ENCODE measurements at regions of chr19 and their contacts with region 1.

Region 1: GRCh38 chr19:1652471-1653299 is at the start of gene TCF3:
- DNase-seq: peak; percentile 99
- ATAC-seq: peak; percentile 82
- H3K4me3 Mint-ChIP-seq: peak within 1 kb of the TSS; percentile 91
- H3K27ac Mint-ChIP-seq: peak within 1 kb of the TSS; percentile 95
- H3K4me1 Mint-ChIP-seq: peaks cover 68% of the 10 kb centered on the region
- H3K27me3 Mint-ChIP-seq: no peaks in the 10 kb centered on the region
- CTCF ChIP-seq: no peak
- total RNA-seq, gene TCF3: 139 and 143 TPM in 2 replicates

Region 2: GRCh38 chr19:1624458-1624857 is 28.2 kb before region 1 on chr19:
- CTCF ChIA-PET with region 1: interaction called, 4 read pairs
- POLR2A ChIA-PET with region 1: interaction called, 4 read pairs
- intact Hi-C with region 1: loop called (anchors 2 kb)
- DNase-seq: peak; percentile 44
- ATAC-seq: peak; percentile 84
- H3K4me3 Mint-ChIP-seq: no peak overlapping the region
- H3K27ac Mint-ChIP-seq: no peak overlapping the region
- H3K4me1 Mint-ChIP-seq: peaks cover 7% of the 10 kb centered on the region
- H3K27me3 Mint-ChIP-seq: no peaks in the 10 kb centered on the region
- CTCF ChIP-seq: no peak

Region 3: GRCh38 chr19:1665565-1666047 is 12.9 kb after region 1 on chr19:
- CTCF ChIA-PET with region 1: interaction called, 10 read pairs
- POLR2A ChIA-PET with region 1: interaction called, 121 read pairs
- intact Hi-C with region 1: loop called (anchors 1 kb)
- DNase-seq: peak; percentile 35
- ATAC-seq: peak; percentile 9
- H3K4me3 Mint-ChIP-seq: peak overlapping the region; percentile 55
- H3K27ac Mint-ChIP-seq: peak overlapping the region; percentile 79
- H3K4me1 Mint-ChIP-seq: peaks cover 73% of the 10 kb centered on the region
- H3K27me3 Mint-ChIP-seq: no peaks in the 10 kb centered on the region
- CTCF ChIP-seq: no peak

Region 4: DNA sequence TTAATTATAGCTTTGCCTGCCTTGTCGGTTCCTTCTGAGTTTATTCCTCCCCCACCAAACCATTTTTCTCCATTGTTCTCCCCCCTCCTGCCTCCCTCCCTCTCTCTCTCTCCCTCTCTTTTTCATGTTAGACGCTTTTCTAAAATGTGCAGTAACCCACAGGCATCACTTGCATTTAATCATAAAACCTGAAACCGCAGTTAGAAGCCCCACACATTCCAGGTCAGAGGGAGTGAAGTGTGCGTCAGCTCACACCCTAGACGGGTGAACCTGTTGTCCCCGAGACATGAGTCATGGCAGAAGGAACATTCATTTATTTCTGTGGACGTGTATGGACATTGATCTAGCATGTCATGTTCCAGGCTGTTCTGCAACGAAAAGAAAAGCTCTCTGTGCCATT is 120.5 kb after region 1 on chr19:
- CTCF ChIA-PET with region 1: no interaction called
- POLR2A ChIA-PET with region 1: interaction called, 12 read pairs
- intact Hi-C with region 1: no loop called
- DNase-seq: no peak
- ATAC-seq: no peak
- H3K4me3 Mint-ChIP-seq: no peak overlapping the region
- H3K27ac Mint-ChIP-seq: no peak overlapping the region
- H3K4me1 Mint-ChIP-seq: no peaks in the 10 kb centered on the region
- H3K27me3 Mint-ChIP-seq: peaks cover 52% of the 10 kb centered on the region
- CTCF ChIP-seq: no peak

Region 5: GRCh38 chr19:1848399-1849131 is 195.9 kb after region 1 on chr19 and contains the start of gene REXO1:
- CTCF ChIA-PET with region 1: no interaction called
- POLR2A ChIA-PET with region 1: no interaction called
- intact Hi-C with region 1: loop called (anchors 1 kb)
- DNase-seq: peak; percentile 98
- ATAC-seq: peak; percentile 74
- H3K4me3 Mint-ChIP-seq: peak within 1 kb of the TSS; percentile 88
- H3K27ac Mint-ChIP-seq: peak within 1 kb of the TSS; percentile 88
- H3K4me1 Mint-ChIP-seq: peaks cover 69% of the 10 kb centered on the region
- H3K27me3 Mint-ChIP-seq: no peaks in the 10 kb centered on the region
- CTCF ChIP-seq: peak; percentile 86
- total RNA-seq, gene REXO1: 56.3 and 69.6 TPM in 2 replicates